ENCODE measurements at regions of chr1 and their contacts with region 1.

Region 1: DNA sequence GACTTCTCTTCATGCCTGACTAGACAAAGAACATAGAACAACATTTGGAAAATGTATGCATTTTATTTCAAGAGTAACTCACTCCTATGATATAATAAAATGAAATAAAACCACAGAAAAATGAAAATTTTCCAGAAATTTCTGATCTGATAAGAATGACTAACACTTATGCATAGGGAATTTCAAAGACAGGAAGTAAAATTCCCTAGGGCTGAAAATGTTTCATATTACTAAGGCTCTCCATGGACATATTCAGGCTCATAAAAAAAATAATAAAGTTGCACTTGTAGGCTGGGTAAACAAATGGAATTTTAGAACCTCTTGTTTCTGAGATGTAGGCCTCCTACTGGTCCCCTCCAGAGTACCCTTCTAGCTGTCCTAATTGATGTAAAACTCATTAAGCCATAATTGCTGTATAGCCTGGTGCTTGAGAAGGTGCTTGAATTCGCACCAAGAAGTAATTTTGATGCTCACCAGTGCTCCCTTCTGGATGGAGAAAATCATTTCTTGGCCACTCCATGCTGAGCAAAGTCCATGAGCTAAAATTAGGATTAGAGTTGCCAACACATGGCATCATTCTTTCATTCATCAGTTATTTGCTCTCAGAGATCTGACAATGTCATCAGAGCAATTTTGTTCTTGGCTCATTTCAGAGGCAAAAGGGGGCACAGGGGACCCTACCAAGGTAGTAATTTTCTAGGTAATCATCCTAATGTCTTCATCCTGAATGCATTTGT is 641.0 kb upstream of the CAMK1G start:
- DNase-seq: no peak
- ATAC-seq: no peak
- H3K4me3 ChIP-seq: no peak overlapping the region
- H3K4me3 Mint-ChIP-seq: no peak overlapping the region
- H3K27ac ChIP-seq: no peak overlapping the region
- H3K27ac Mint-ChIP-seq: no peak overlapping the region
- H3K4me1 ChIP-seq: no peaks in the 10 kb centered on the region
- H3K4me1 Mint-ChIP-seq: no peaks in the 10 kb centered on the region
- H3K27me3 ChIP-seq: no peaks in the 10 kb centered on the region
- H3K27me3 Mint-ChIP-seq: peaks cover 6 to 39% (median 22%) of the 10 kb centered on the region in 5 donors

Region 2: DNA sequence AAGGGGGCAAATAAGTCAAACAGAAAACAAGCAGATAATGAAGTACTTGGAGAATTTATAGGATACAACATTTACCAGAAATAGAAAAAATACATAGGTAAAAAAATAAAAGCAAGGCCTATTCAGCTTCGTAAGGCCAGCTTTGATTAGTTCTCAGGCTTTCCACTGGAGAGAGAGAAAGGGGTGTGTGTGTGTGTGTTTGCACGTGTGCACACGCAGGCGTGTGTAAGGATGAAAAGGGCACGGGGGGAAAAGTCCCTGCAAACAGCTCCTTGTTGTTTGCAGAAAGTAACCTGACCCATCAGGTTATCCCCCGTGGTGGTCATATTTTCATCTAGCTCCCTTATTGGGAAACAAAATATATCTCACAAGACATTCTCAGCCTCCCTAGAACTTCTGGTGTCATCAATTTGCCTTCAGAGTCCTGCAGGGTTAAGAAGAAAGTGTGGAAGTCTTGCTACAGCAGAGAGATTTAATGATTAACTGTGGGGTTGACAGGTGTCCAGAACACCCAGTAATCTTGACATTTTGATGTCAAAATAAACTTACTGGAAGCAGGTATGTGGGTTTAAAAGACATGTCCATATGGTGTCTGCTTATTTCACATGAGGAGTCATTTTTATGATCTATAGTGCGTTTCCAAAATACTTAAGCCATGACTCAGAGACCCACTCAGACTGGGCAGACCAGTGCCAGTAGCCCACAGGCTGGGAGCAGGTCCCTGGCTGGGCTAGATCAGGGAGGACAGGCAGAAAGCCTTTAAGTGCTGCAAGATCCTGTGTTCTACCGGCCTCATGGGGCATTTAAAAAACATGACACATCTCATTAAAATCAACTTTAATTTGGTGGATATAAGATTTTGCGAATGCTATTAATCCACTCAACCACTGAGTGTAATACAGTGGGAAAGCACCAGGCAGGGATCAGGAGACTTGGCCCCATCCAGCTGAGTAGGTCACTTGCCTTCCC is 153.3 kb after region 1 on chr1:
- CTCF ChIA-PET with region 1: no interaction called
- POLR2A ChIA-PET with region 1: no interaction called
- intact Hi-C with region 1: loop called in 1 of 2 experiments (anchors 10 kb)
- DNase-seq: no peak
- ATAC-seq: no peak
- H3K4me3 ChIP-seq: no peak overlapping the region
- H3K4me3 Mint-ChIP-seq: no peak overlapping the region
- H3K27ac ChIP-seq: no peak overlapping the region
- H3K27ac Mint-ChIP-seq: no peak overlapping the region
- H3K4me1 ChIP-seq: no peaks in the 10 kb centered on the region
- H3K4me1 Mint-ChIP-seq: no peaks in the 10 kb centered on the region
- H3K27me3 ChIP-seq: no peaks in the 10 kb centered on the region
- H3K27me3 Mint-ChIP-seq: peaks cover 0 to 16% (median 2%) of the 10 kb centered on the region in 5 donors